Motor neuron (in vitro differentiated cells): ENCODE measurements at regions of chr2 and their contacts with region 1.

Region 1: DNA sequence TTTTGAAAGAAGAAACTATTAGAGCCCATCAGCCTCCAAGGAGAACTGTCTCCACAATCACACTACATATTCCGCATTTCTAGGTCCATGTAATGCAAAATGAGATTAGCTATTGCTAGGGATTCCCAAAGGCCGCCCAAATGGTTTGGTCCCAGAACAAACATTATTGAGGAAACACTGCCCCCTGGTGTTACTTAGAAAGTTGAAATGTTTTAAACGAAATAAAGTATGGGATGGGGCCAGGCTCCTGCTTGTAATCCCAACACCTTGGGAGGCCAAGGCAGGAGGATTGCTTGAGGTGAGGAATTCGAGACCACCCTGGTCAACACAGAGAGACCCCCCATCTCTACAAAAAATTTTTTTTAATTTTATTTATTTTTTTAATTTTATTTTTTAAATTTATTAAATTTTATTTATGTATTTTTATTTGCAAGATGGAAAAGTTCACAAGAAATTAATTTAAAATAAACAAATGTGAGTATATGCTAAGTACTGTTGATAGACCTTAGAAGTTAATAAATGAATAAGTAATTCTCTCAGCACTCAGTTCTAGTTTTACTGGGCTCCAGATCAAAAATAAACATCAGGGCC is 5.5 kb downstream of the NHEJ1 start:
- ATAC-seq: peak in 7 of 8 experiments; percentile 11 to 56 (median 24)
- H3K4me3 ChIP-seq: no peak overlapping the region
- H3K27ac ChIP-seq: no peak overlapping the region
- H3K4me1 ChIP-seq: peaks cover 0 to 4% of the 10 kb centered on the region in 2 donors

Region 2: DNA sequence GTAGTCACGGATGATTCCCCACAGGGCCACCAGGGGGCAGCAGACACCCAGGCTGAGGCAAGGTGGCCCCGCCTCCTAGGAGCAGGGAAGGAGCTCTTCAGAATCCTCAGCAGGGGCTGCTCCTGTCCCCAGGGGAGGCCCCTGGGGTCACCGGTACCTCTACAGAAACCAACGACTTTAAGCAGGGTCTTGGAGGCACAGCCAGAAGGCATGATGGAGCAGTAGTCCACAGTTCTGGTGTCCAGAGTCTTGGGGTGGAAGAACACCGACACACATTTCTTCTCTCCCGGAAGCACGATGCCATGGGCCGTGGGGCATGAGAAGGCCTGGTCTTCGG is 125.4 kb before region 1 on chr2:
- in situ Hi-C with region 1: loop called in 1 of 9 experiments (anchors 10 kb)
- ATAC-seq: peak; percentile 89 to 99 (median 94)
- H3K4me3 ChIP-seq: no peak overlapping the region
- H3K27ac ChIP-seq: no peak overlapping the region
- H3K4me1 ChIP-seq: no peaks in the 10 kb centered on the region

Region 3: DNA sequence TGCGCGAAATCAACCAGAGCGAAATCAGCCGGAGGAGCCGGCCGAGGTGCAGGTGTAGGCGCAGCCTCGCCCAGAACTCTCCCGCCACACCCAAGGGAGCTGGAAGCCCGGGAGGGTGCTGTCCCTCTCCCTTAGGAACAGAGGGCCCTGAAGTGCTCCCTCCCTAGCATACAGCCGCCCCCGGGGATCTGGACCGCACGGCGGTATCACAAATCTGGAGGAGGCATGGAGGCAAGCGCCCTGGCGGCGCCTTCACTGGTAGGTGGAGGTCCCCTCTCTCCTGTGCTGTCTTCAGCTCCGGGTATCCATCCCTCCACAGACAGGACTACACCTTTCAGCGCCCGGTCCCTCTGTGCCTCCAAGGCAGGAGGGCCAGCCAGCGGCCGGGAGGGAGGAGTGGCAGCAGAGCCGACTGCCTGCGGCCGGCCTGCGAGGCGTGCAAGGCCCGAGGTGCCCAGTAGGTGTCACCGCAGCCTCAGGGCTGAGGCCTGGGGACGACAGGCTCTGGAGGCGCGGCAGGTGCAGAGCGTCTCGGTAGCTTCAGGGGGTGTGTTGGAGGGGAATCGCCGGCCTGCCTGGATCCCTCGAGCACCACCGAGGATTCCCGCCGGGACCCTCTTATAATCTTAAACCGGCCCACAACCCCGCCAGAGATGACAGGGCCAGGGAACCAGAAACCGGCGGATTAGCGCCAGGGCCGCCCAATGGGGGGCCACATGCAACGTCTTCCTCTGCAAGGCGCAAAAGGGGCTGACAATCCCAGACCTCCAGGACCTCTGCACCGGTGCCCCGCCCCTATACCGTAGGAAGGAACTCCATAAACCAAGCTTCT is 97.2 kb before region 1 on chr2:
- in situ Hi-C with region 1: loop called in 2 of 9 experiments (anchors 10 to 25 kb)
- ATAC-seq: peak; percentile 36 to 95 (median 93)
- H3K4me3 ChIP-seq: peak overlapping the region; percentile 18 to 35 (median 19)
- H3K27ac ChIP-seq: no peak overlapping the region
- H3K4me1 ChIP-seq: peaks cover 0 to 5% of the 10 kb centered on the region in 2 donors

Region 4: GRCh38 chr2:219378163-219378851 is 223.2 kb after region 1 on chr2:
- in situ Hi-C with region 1: no loop called
- ATAC-seq: peak in 3 of 8 experiments; percentile 20 to 81 (median 71)
- H3K4me3 ChIP-seq: no peak overlapping the region
- H3K27ac ChIP-seq: no peak overlapping the region
- H3K4me1 ChIP-seq: no peaks in the 10 kb centered on the region